ENCODE measurements at regions of chr4 and their contacts with region 1.

Region 1: DNA sequence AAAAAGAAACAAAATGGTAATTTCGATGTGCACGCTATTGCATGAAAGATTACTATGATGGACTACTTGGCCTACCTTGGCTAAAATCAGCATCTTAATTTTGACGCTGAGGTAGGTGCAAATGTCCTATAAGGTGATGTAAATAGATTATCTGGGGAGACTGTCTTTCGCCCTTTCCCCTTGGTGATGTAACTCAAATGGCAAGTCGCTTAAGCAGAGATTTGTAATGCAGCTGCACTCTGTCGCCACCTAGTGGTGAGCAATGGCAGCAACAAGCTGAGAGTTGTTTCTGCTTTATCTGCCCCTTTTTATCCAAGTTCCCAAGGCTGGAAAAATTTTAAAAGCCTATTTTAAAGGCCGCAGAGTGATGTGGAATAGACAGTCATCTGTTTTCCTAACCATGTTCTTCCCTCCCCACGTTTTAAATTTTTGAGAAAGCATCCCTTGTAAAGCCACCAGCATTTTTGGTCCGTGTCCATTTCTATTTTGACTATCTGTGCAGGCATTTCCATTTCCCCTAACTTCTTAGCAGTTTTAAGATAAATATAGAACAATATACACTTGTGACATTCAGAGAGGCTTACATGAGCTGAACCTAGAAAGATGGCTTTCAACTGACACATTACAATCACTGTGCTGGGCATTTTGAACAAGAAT is 62.4 kb upstream of the PDLIM3 start:
- DNase-seq: peak; percentile 84
- H3K4me3 ChIP-seq: no peak overlapping the region
- H3K27ac ChIP-seq: no peak overlapping the region
- H3K4me1 ChIP-seq: no peaks in the 10 kb centered on the region
- H3K27me3 ChIP-seq: no peaks in the 10 kb centered on the region
- CTCF ChIP-seq: peak; percentile 95 to 96
- POLR2A ChIP-seq: no peak

Region 2: DNA sequence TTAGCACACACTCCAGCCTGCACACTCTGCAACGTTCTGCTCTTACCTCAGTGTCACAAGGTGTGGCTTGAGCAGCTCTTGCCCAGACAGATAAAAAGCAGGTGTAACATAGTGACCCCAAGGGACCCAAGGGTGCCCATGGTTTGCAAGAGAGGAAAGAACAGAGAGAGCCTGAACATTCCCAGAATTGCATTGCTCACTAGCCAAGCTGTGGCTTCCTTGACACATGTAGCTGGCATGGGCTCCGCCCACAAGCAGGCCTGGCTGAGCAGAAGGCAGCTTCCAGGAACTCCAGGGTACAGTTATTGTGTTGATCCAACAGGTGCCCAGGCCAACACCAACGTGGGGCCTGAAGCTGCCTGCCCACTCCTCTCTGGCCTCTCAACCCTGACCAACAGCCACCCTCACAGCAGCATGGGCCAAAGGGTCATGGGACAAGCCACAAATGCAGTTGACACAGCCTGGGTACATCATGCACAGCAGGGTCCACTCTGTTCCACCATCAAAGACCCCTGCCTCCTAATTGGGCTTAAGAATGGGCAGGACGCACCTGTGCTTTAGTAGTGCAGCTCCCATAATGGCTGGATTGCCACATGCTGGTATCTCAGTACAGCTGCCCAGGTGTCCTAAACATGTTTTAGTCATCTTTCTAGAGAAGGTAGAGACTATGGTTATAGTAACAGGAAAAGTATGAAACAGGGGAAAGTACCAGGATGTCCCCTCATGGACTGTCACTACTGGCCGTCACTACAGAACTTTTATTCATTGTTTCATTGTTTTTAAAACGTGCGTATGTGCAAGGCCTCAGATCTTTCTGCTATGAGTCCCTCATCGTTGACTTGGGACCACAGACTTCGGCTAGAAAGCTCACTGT is 698.2 kb before region 1 on chr4:
- CTCF ChIA-PET with region 1: no interaction called
- POLR2A ChIA-PET with region 1: no interaction called
- dilution Hi-C with region 1: no loop called
- intact Hi-C with region 1: no loop called
- DNase-seq: no peak
- H3K4me3 ChIP-seq: no peak overlapping the region
- H3K27ac ChIP-seq: no peak overlapping the region
- H3K4me1 ChIP-seq: no peaks in the 10 kb centered on the region
- H3K27me3 ChIP-seq: no peaks in the 10 kb centered on the region
- CTCF ChIP-seq: no peak
- POLR2A ChIP-seq: no peak

Region 3: GRCh38 chr4:185039508-185040273 is 558.0 kb before region 1 on chr4:
- CTCF ChIA-PET with region 1: interaction called, 6 read pairs
- POLR2A ChIA-PET with region 1: no interaction called
- dilution Hi-C with region 1: no loop called
- intact Hi-C with region 1: loop called (anchors 10 kb)
- DNase-seq: peak; percentile 68
- H3K4me3 ChIP-seq: no peak overlapping the region
- H3K27ac ChIP-seq: no peak overlapping the region
- H3K4me1 ChIP-seq: no peaks in the 10 kb centered on the region
- H3K27me3 ChIP-seq: peaks cover 0 to 3% of the 10 kb centered on the region in 2 experiments
- CTCF ChIP-seq: peak; percentile 73 to 76
- POLR2A ChIP-seq: no peak

Region 4: GRCh38 chr4:185343726-185344581 is 253.7 kb before region 1 on chr4:
- CTCF ChIA-PET with region 1: no interaction called
- POLR2A ChIA-PET with region 1: no interaction called
- dilution Hi-C with region 1: no loop called
- intact Hi-C with region 1: loop called (anchors 10 kb)
- DNase-seq: peak; percentile 57
- H3K4me3 ChIP-seq: no peak overlapping the region
- H3K27ac ChIP-seq: peak overlapping the region; percentile 62
- H3K4me1 ChIP-seq: peaks cover 19% of the 10 kb centered on the region
- H3K27me3 ChIP-seq: no peaks in the 10 kb centered on the region
- CTCF ChIP-seq: no peak
- POLR2A ChIP-seq: no peak

Region 5: DNA sequence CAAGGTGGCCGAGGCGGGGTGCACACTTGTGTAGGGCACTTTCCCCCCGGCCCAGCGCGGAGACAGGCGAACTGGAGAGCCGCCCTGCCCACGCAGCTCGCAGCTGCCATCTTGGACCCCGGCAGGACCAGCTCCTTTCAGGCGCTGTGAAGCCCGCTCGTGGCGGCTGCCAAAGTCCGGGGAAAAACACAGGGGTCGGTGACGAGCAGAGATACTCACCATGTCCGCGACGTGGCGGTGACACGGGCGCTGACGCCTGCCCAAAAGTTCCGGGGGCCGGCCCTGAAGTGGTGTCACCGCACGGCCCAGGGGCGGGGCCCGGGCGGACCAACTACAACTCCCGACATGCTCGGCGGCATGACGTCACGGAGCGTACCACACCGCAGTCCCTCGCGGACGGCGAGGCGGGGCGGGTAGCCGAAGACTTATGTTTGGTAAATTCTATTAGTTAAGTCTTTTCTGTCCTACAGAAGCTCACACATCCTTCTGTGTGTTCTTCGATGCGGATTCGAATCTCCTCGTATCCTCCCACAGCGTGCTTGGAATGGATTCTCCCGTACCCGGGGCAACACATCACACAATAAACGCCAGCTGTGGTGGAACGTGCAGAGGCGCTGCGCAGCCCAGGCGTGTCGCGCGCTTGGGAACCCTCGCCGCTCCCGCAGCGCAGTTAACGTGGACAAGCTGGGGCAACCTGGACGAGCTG is 171.9 kb before region 1 on chr4 and contains the start of gene UFSP2:
- CTCF ChIA-PET with region 1: interaction called, 22 read pairs
- POLR2A ChIA-PET with region 1: no interaction called
- dilution Hi-C with region 1: no loop called
- intact Hi-C with region 1: loop called (anchors 1 kb)
- DNase-seq: peak; percentile 93
- H3K4me3 ChIP-seq: peak within 1 kb of the TSS; percentile 59 to 90 (median 69)
- H3K27ac ChIP-seq: peak within 1 kb of the TSS; percentile 96
- H3K4me1 ChIP-seq: peaks cover 8% of the 10 kb centered on the region
- H3K27me3 ChIP-seq: no peaks in the 10 kb centered on the region
- CTCF ChIP-seq: no peak
- POLR2A ChIP-seq: no peak
- total RNA-seq, gene UFSP2: 25.2 and 26.7 TPM in 2 replicates

Region 6: GRCh38 chr4:185534866-185535611 is 62.6 kb before region 1 on chr4 and contains the start of gene PDLIM3:
- CTCF ChIA-PET with region 1: interaction called, 36 read pairs
- POLR2A ChIA-PET with region 1: interaction called, 4 read pairs
- dilution Hi-C with region 1: no loop called
- intact Hi-C with region 1: loop called (anchors 1 kb)
- DNase-seq: peak; percentile 65
- H3K4me3 ChIP-seq: peak within 1 kb of the TSS; percentile 78 to 83 (median 81)
- H3K27ac ChIP-seq: peak within 1 kb of the TSS; percentile 56
- H3K4me1 ChIP-seq: peaks cover 10% of the 10 kb centered on the region
- H3K27me3 ChIP-seq: peaks cover 0 to 6% of the 10 kb centered on the region in 2 experiments
- CTCF ChIP-seq: no peak
- POLR2A ChIP-seq: peak; percentile 53
- total RNA-seq, gene PDLIM3: 9.7 and 12.2 TPM in 2 replicates

Region 7: DNA sequence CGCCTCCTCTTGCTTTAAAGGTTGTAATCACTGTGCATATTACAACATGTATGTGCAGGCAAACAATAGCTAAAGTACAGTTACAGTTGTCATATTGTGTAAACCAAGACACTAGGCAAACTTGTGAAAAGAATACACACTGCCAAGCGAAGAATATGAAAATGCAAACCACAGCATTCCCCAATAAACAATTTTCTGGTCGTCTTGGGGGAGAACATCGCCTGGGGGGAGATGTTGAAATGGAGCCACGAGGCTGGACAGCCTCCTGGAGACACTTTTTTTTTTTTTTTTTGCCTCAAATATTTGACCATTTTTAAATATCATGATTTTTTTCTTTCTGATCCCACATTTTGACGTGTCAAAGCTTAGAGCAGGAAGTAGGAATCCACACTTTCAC is 10.6 kb before region 1 on chr4:
- CTCF ChIA-PET with region 1: interaction called, 15 read pairs
- POLR2A ChIA-PET with region 1: no interaction called
- dilution Hi-C with region 1: no loop called
- intact Hi-C with region 1: no loop called
- DNase-seq: no peak
- H3K4me3 ChIP-seq: no peak overlapping the region
- H3K27ac ChIP-seq: no peak overlapping the region
- H3K4me1 ChIP-seq: no peaks in the 10 kb centered on the region
- H3K27me3 ChIP-seq: no peaks in the 10 kb centered on the region
- CTCF ChIP-seq: no peak
- POLR2A ChIP-seq: no peak